BJ (cell line): ENCODE measurements at regions of chr1 and their contacts with region 1.

Region 1: GRCh38 chr1:35573198-35574090 is at the start of gene TFAP2E:
- DNase-seq: no peak
- H3K4me3 ChIP-seq: peak within 1 kb of the TSS; percentile 55
- H3K27me3 ChIP-seq: peaks cover 2% of the 10 kb centered on the region; the same call in 1 of the 2 replicates
- CTCF ChIP-seq: no peak
- polyA plus RNA-seq, gene TFAP2E: 0.07 and 0.13 TPM in 2 replicates

Region 2: GRCh38 chr1:35202048-35202719 is 371.3 kb before region 1 on chr1:
- CTCF ChIA-PET with region 1: no interaction called
- POLR2A ChIA-PET with region 1: no interaction called
- DNase-seq: no peak
- H3K4me3 ChIP-seq: no peak overlapping the region
- H3K27me3 ChIP-seq: no peaks in the 10 kb centered on the region
- CTCF ChIP-seq: peak; percentile 92

Region 3: GRCh38 chr1:35777109-35777508 is 203.7 kb after region 1 on chr1:
- CTCF ChIA-PET with region 1: interaction called, 20 read pairs
- POLR2A ChIA-PET with region 1: no interaction called
- DNase-seq: no peak
- H3K4me3 ChIP-seq: no peak overlapping the region
- H3K27me3 ChIP-seq: no peaks in the 10 kb centered on the region
- CTCF ChIP-seq: no peak